ENCODE measurements at regions of chr6 and their contacts with region 1.

Region 1: DNA sequence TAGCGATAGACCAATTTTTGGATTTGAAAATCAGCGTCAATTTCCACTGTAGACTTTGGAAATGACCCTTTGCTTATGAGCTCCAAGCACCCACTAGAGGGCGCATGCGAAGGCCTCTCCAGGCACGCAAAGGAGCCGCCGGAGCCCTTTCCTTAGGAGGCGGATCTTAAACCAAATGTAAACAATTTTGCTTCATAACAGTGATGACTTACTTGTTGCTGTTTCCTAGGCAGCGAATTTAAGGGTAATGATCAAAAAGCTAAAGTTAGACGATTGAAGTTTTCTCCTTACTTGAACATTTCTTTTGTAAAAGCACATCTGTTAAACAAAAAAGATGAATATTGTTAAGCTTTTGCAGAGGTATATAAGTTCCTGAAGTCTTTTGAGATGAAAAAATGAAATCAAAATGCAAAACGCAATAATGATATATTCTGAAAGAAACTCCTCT is 29.2 kb upstream of the EXOC2 start:
- DNase-seq: peak; percentile 64 to 74
- H3K4me3 ChIP-seq: no peak overlapping the region
- H3K4me3 Mint-ChIP-seq: no peak overlapping the region
- H3K27ac Mint-ChIP-seq: no peak overlapping the region
- H3K4me1 ChIP-seq: no peaks in the 10 kb centered on the region
- H3K4me1 Mint-ChIP-seq: no peaks in the 10 kb centered on the region
- H3K27me3 ChIP-seq: no peaks in the 10 kb centered on the region
- H3K27me3 Mint-ChIP-seq: peaks cover 30% of the 10 kb centered on the region
- CTCF ChIP-seq: peak; percentile 65 to 89

Region 2: DNA sequence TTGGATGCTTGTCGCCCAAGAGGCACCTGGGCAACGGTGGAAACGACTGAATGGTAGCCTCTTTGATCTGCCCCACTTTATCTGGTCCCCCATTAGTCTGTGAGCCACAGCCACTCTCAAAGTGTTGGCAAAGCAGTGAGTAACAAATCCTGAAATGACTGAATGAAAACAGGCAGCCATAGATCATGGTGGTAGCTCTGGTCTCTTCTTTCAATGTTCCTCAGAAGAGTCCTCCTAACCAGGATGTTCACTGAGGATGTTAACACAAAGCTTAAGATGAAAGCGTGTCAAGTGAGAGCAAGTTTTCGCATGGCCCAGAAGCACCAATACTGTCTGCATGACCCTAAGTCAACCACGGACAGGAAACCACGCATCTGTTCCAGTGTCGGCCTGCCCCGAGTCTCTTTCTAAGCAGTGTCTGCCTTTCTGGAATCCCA is 223.3 kb before region 1 on chr6:
- CTCF ChIA-PET with region 1: no interaction called
- POLR2A ChIA-PET with region 1: no interaction called
- intact Hi-C with region 1: no loop called
- DNase-seq: no peak
- H3K4me3 ChIP-seq: no peak overlapping the region
- H3K4me3 Mint-ChIP-seq: no peak overlapping the region
- H3K27ac Mint-ChIP-seq: no peak overlapping the region
- H3K4me1 ChIP-seq: no peaks in the 10 kb centered on the region
- H3K4me1 Mint-ChIP-seq: no peaks in the 10 kb centered on the region
- H3K27me3 ChIP-seq: no peaks in the 10 kb centered on the region
- H3K27me3 Mint-ChIP-seq: no peaks in the 10 kb centered on the region
- CTCF ChIP-seq: no peak

Region 3: DNA sequence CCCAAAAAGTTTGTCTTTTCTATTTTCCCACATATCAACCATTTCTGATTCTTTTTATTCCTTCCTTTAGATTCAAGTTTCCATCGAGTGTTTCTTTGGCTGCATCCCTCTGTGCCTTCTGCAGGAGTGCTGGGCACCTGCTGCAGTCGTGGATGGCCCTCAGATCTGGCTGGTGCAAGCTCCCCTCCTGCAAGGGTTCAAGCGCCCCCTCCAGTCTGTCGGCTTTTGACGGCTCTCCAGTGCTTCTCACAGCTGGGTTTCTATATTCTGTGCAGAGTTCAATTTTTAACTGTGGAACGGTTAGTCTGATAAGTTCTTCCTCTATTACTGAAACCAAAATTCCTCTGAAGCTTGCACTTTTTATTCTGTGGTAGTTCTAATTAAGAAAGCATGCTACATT is 197.3 kb before region 1 on chr6:
- CTCF ChIA-PET with region 1: no interaction called
- POLR2A ChIA-PET with region 1: no interaction called
- intact Hi-C with region 1: no loop called
- DNase-seq: no peak
- H3K4me3 ChIP-seq: no peak overlapping the region
- H3K4me3 Mint-ChIP-seq: no peak overlapping the region
- H3K27ac Mint-ChIP-seq: no peak overlapping the region
- H3K4me1 ChIP-seq: no peaks in the 10 kb centered on the region
- H3K4me1 Mint-ChIP-seq: no peaks in the 10 kb centered on the region
- H3K27me3 ChIP-seq: no peaks in the 10 kb centered on the region
- H3K27me3 Mint-ChIP-seq: no peaks in the 10 kb centered on the region
- CTCF ChIP-seq: no peak

Region 4: GRCh38 chr6:593139-593906 is 128.8 kb before region 1 on chr6:
- CTCF ChIA-PET with region 1: interaction called, 5 read pairs
- POLR2A ChIA-PET with region 1: no interaction called
- intact Hi-C with region 1: loop called (anchors 5 kb)
- DNase-seq: peak; percentile 41 to 55
- H3K4me3 ChIP-seq: no peak overlapping the region
- H3K4me3 Mint-ChIP-seq: no peak overlapping the region
- H3K27ac Mint-ChIP-seq: no peak overlapping the region
- H3K4me1 ChIP-seq: no peaks in the 10 kb centered on the region
- H3K4me1 Mint-ChIP-seq: no peaks in the 10 kb centered on the region
- H3K27me3 ChIP-seq: no peaks in the 10 kb centered on the region
- H3K27me3 Mint-ChIP-seq: no peaks in the 10 kb centered on the region
- CTCF ChIP-seq: peak; percentile 47 to 52

Region 5: GRCh38 chr6:753486-753885 is 31.4 kb after region 1 on chr6:
- CTCF ChIA-PET with region 1: no interaction called
- POLR2A ChIA-PET with region 1: no interaction called
- intact Hi-C with region 1: no loop called
- DNase-seq: no peak
- H3K4me3 ChIP-seq: no peak overlapping the region
- H3K4me3 Mint-ChIP-seq: no peak overlapping the region
- H3K27ac Mint-ChIP-seq: no peak overlapping the region
- H3K4me1 ChIP-seq: no peaks in the 10 kb centered on the region
- H3K4me1 Mint-ChIP-seq: no peaks in the 10 kb centered on the region
- H3K27me3 ChIP-seq: no peaks in the 10 kb centered on the region
- H3K27me3 Mint-ChIP-seq: peaks cover 6% of the 10 kb centered on the region
- CTCF ChIP-seq: no peak

Region 6: DNA sequence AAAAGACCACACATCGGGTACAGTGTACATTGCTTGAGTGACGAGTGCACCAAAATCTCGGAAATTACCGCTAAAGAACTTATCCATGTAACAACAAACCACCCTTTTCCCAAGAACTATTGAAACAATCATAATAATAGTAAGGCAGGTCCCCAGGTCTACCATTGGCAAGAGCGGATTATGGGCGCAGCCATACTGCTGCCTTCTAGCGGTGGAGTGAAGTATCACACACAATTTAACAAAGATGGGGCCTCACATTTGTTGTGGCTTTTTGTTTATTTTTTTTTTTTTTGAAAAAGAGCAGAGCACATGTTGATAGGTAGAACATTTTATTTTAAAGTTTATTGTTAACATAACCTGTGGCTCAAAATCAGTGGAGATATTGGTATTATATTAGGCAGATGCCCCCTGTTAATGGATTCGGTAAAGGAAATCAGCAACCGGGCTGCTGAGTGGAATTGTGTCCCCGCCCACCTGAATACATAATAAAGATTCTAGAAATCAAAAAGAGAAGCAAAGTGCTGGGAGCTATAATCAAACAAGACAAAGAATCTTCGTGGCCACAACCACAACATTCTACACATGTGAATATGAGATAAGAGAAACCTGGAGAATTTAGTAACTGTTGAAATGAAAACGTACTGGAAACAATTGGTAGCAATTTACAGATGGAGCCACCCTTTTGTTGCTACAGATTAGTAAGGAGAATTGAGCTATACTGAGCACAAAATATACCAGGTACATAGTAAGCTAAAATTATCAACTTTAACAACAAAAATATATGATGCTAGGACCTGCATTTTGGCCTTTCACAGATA is 65.1 kb after region 1 on chr6:
- CTCF ChIA-PET with region 1: no interaction called
- POLR2A ChIA-PET with region 1: no interaction called
- intact Hi-C with region 1: loop called (anchors 2 kb)
- DNase-seq: peak in 1 of 2 experiments; percentile 24
- H3K4me3 ChIP-seq: no peak overlapping the region
- H3K4me3 Mint-ChIP-seq: no peak overlapping the region
- H3K27ac Mint-ChIP-seq: no peak overlapping the region
- H3K4me1 ChIP-seq: no peaks in the 10 kb centered on the region
- H3K4me1 Mint-ChIP-seq: no peaks in the 10 kb centered on the region
- H3K27me3 ChIP-seq: no peaks in the 10 kb centered on the region
- H3K27me3 Mint-ChIP-seq: peaks cover 6% of the 10 kb centered on the region
- CTCF ChIP-seq: peak; percentile 31 to 47

Measured in Caco-2 (cell line).